ENCODE measurements at regions of chr4 and their contacts with region 1.

Region 1: GRCh38 chr4:145760961-145761929 is 81.3 kb downstream of the C4orf51 start:
- DNase-seq: peak; percentile 58 to 68
- ATAC-seq: peak; percentile 93 to 99 (median 96)
- H3K4me3 ChIP-seq: no peak overlapping the region
- H3K27ac ChIP-seq: peak overlapping the region in 7 of 10 donors; percentile 46 to 75 (median 55)
- H3K4me1 ChIP-seq: peaks cover 0 to 5% (median 0%) of the 10 kb centered on the region in 9 donors
- H3K27me3 ChIP-seq: no peaks in the 10 kb centered on the region
- CTCF ChIP-seq: peak in 2 of 9 donors; percentile 11 to 21

Region 2: GRCh38 chr4:145644699-145645098 is 116.5 kb before region 1 on chr4:
- intact Hi-C with region 1: loop called in 1 of 10 experiments (anchors 10 kb)
- DNase-seq: no peak
- ATAC-seq: no peak
- H3K4me3 ChIP-seq: no peak overlapping the region
- H3K27ac ChIP-seq: no peak overlapping the region
- H3K4me1 ChIP-seq: peaks cover 0 to 12% (median 3%) of the 10 kb centered on the region in 9 donors
- H3K27me3 ChIP-seq: no peaks in the 10 kb centered on the region
- CTCF ChIP-seq: peak in 1 of 9 donors; percentile 25